Activated CD4-positive, alpha-beta T cell treated with anti-CD3 and anti-CD28 coated beads for 36 hours (primary cell): ENCODE measurements at regions of chr12 and their contacts with region 1.

Region 1: GRCh38 chr12:14769969-14770495 is 33.2 kb downstream of the WBP11 start:
- DNase-seq: peak; percentile 94
- ATAC-seq: peak; percentile 45
- H3K4me3 Mint-ChIP-seq: peak overlapping the region; percentile 97
- H3K27ac Mint-ChIP-seq: peak overlapping the region; percentile 99
- H3K4me1 Mint-ChIP-seq: peaks cover 35% of the 10 kb centered on the region
- H3K27me3 Mint-ChIP-seq: no peaks in the 10 kb centered on the region

Region 2: GRCh38 chr12:14257734-14258574 is 512.1 kb before region 1 on chr12:
- CTCF ChIA-PET with region 1: no interaction called
- POLR2A ChIA-PET with region 1: no interaction called
- intact Hi-C with region 1: loop called (anchors 1 to 10 kb)
- DNase-seq: peak; percentile 95
- ATAC-seq: peak; percentile 78
- H3K4me3 Mint-ChIP-seq: peak overlapping the region; percentile 66
- H3K27ac Mint-ChIP-seq: peak overlapping the region; percentile 99
- H3K4me1 Mint-ChIP-seq: peaks cover 48% of the 10 kb centered on the region
- H3K27me3 Mint-ChIP-seq: no peaks in the 10 kb centered on the region

Region 3: DNA sequence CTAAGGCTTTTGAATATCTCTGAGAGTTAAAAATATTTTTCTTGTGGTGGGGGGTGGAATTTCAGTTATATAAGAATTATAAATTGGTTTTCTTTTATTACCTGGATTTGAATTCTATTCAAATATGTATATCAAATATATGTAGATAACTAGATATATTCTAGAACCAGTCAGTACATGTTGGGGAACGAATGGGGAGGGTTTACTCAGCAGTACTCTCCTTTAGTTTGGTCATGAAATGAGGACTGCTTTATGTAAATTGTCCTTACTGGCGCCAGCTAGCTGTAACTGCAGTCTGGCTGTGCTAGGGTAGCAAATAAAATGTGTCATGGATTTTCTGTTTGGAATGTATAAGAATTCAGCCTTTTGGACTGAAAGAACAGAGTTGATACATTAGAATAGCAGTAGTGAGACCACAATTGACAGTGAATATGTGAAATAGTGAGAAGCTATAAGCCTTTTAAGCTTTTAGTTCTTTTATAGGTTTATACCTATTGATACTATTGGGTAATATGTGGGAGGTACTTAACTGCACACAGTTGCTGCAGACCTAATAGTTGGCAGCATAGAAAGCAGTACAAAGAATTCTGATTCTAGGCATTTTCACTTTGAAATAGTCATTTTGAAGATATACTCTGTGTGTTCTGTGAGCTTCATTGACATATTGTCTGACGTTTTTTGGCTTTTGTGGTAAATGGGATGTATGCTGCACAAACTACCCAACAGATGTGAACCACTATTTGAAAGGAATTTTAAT is 375.5 kb before region 1 on chr12:
- CTCF ChIA-PET with region 1: interaction called, 3 read pairs
- POLR2A ChIA-PET with region 1: interaction called, 4 read pairs
- intact Hi-C with region 1: loop called (anchors 5 to 10 kb)
- DNase-seq: peak; percentile 66
- ATAC-seq: peak; percentile 82
- H3K4me3 Mint-ChIP-seq: peak overlapping the region; percentile 71
- H3K27ac Mint-ChIP-seq: peak overlapping the region; percentile 96
- H3K4me1 Mint-ChIP-seq: peaks cover 78% of the 10 kb centered on the region
- H3K27me3 Mint-ChIP-seq: no peaks in the 10 kb centered on the region

Region 4: DNA sequence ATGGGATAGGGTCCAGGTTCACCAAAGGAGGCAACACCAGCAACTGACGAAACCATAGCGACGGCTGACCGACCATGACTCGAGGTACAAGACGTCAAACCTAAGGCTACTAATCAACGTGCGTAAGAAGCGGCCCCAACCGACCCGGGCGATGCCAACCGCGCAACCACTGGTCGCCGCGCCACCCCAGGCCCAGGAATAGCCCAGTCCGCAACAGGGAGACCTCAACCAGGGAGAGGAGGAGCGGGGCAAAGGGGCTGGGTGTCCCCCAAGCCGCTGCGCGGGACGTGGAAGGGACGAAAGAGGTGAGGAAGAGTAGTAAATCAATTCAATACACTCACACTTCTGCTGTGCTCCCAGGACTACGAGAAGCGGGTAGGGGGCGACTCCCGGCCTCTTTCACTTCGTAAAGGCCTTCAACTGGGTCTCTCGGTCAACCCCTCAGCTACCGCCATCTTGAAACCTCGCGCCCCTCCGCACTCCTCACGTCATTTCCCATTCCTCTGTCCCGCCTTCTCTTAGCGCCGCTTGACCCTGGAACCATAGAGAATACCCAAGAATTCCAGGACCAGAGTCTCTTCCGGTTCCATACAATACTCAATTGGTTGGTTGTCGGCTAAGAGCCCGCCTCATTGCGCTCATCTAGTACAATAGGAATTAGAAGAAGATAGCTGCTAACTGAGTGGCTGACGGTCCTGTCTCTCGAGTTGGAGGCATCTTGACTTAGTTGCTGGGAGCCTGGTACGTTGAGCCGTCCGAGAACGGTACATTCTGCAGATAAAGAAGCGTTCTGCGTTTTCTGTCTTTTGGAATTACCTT is 33.2 kb after region 1 on chr12 and contains the starts of genes C12orf60 and WBP11:
- CTCF ChIA-PET with region 1: interaction called, 38 read pairs
- POLR2A ChIA-PET with region 1: interaction called, 24 read pairs
- intact Hi-C with region 1: loop called (anchors 1 kb)
- DNase-seq: peak; percentile 92
- ATAC-seq: peak; percentile 99
- H3K4me3 Mint-ChIP-seq: no peak within 1 kb of the TSS
- H3K27ac Mint-ChIP-seq: no peak within 1 kb of the TSS
- H3K4me1 Mint-ChIP-seq: peaks cover 33% of the 10 kb centered on the region
- H3K27me3 Mint-ChIP-seq: no peaks in the 10 kb centered on the region
- total RNA-seq, gene C12orf60: 2.9 to 3.0 TPM
- total RNA-seq, gene WBP11: 143 to 193 TPM

Region 5: GRCh38 chr12:14948672-14949071 is 178.6 kb after region 1 on chr12:
- CTCF ChIA-PET with region 1: no interaction called
- POLR2A ChIA-PET with region 1: interaction called, 8 read pairs
- intact Hi-C with region 1: loop called in 1 of 2 experiments (anchors 2 kb)
- DNase-seq: peak; percentile 68
- ATAC-seq: peak; percentile 82
- H3K4me3 Mint-ChIP-seq: peak overlapping the region; percentile 73
- H3K27ac Mint-ChIP-seq: peak overlapping the region; percentile 96
- H3K4me1 Mint-ChIP-seq: peaks cover 87% of the 10 kb centered on the region
- H3K27me3 Mint-ChIP-seq: no peaks in the 10 kb centered on the region

Region 6: GRCh38 chr12:15372352-15372751 is 602.3 kb after region 1 on chr12:
- CTCF ChIA-PET with region 1: no interaction called
- POLR2A ChIA-PET with region 1: no interaction called
- intact Hi-C with region 1: no loop called
- DNase-seq: no peak
- ATAC-seq: no peak
- H3K4me3 Mint-ChIP-seq: no peak overlapping the region
- H3K27ac Mint-ChIP-seq: no peak overlapping the region
- H3K4me1 Mint-ChIP-seq: no peaks in the 10 kb centered on the region
- H3K27me3 Mint-ChIP-seq: peaks cover 7% of the 10 kb centered on the region

Region 7: DNA sequence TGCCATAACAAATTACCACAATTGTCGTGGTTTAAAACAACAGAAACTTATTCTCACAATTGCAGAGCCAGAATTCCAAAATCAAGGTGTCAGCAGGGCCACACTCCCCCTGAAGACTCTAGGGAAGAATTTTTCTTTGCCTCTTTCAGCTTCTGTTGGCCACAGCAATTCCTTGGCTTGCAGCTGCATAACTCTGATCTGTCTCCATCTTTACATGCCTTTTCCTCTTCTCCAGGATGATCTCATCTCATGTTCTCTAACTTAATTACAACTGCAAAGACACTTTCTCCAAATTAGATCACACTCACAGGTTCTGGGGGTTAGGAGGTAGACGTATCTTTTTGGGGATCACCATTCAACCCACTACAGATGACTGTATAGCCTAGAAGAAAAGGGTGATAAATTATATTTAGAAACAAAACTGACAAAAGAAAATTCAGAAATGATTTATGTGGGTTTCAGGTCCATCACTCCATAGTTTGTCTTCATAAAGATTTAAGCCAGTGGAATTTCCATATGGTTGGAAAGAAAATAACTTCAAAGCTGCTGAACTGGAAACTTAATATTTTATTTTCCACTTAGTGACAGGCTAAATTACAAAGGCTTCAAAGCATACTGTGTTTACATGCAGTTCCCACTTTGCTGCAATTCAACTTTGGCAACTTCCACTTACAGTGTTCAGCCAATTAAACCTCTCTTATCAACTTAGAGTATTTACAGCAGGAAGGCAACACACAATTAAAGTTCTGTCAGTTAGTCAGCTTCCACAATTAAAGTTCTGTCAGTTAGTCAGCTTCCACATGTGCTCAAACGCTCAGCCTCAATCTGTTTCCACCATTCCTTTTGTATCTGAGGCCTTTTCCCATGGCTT is 805.9 kb after region 1 on chr12:
- CTCF ChIA-PET with region 1: no interaction called
- POLR2A ChIA-PET with region 1: interaction called, 3 read pairs
- intact Hi-C with region 1: loop called (anchors 2 to 5 kb)
- DNase-seq: no peak
- ATAC-seq: peak; percentile 18
- H3K4me3 Mint-ChIP-seq: no peak overlapping the region
- H3K27ac Mint-ChIP-seq: peak overlapping the region; percentile 42
- H3K4me1 Mint-ChIP-seq: peaks cover 62% of the 10 kb centered on the region
- H3K27me3 Mint-ChIP-seq: peaks cover 2% of the 10 kb centered on the region